ENCODE measurements at regions of chr22 and their contacts with region 1.

Region 1: GRCh38 chr22:42270512-42271417 is at the start of gene TCF20:
- DNase-seq: peak; percentile 90
- ATAC-seq: peak; percentile 81
- H3K4me3 ChIP-seq: peak within 1 kb of the TSS; percentile 34 to 93 (median 87)
- H3K4me3 Mint-ChIP-seq: peak within 1 kb of the TSS; percentile 91
- H3K27ac ChIP-seq: peak within 1 kb of the TSS; percentile 61 to 86
- H3K27ac Mint-ChIP-seq: peak within 1 kb of the TSS; percentile 87
- H3K4me1 ChIP-seq: peaks cover 14 to 19% of the 10 kb centered on the region in 2 donors
- H3K4me1 Mint-ChIP-seq: peaks cover 26% of the 10 kb centered on the region
- H3K27me3 ChIP-seq: no peaks in the 10 kb centered on the region
- H3K27me3 Mint-ChIP-seq: no peaks in the 10 kb centered on the region
- CTCF ChIP-seq: no peak
- total RNA-seq, gene TCF20: 67.0 and 81.3 TPM in 2 replicates

Region 2: DNA sequence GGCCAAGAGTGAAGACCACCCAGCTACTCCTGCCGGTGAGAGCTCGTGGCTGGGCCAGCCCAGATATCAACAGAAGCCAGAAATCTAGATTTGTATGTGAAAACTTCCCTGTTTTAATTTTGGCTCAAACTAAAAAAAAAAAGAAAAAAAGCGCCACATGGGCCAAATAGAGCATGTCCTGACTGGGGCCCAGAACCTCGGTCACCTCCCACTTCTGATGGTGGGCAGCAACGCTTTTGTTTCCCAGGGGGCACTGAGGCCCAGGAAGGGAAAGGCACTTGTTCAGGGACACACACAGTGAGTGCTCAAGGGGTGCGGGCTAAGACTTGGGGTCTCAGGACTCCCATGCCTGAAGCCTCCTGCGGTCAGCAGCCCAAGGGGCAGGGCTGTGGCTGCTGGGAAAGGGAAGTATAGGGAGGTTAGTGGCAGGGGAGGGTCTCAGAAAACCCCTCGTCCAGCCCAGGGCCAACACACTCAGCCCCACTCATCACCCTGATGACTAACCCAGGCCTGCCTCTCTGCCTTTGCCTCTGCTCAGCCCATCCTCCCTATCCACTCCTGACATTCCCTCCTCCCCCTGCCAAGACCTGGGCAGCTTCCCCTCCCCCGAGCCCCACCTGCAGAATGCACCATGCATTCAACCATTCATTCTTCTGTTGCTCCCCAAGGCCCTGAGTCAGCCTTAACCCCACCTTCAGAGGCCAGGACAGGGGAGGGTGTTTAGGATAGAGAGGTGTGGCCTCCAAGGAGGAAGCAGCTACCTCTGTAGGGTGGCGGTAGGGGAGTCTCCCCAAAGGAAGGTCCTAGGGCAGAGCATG is 29.7 kb after region 1 on chr22:
- CTCF ChIA-PET with region 1: no interaction called
- POLR2A ChIA-PET with region 1: no interaction called
- intact Hi-C with region 1: loop called (anchors 1 kb)
- DNase-seq: peak; percentile 79
- ATAC-seq: peak; percentile 91
- H3K4me3 ChIP-seq: peak overlapping the region in 4 of 5 experiments; percentile 46 to 61 (median 58)
- H3K4me3 Mint-ChIP-seq: peak overlapping the region; percentile 86
- H3K27ac ChIP-seq: peak overlapping the region; percentile 79 to 82
- H3K27ac Mint-ChIP-seq: peak overlapping the region; percentile 91
- H3K4me1 ChIP-seq: peaks cover 52 to 68% of the 10 kb centered on the region in 2 donors
- H3K4me1 Mint-ChIP-seq: peaks cover 51% of the 10 kb centered on the region
- H3K27me3 ChIP-seq: peaks cover 0 to 10% (median 2%) of the 10 kb centered on the region in 4 experiments
- H3K27me3 Mint-ChIP-seq: peaks cover 9% of the 10 kb centered on the region
- CTCF ChIP-seq: no peak

Region 3: DNA sequence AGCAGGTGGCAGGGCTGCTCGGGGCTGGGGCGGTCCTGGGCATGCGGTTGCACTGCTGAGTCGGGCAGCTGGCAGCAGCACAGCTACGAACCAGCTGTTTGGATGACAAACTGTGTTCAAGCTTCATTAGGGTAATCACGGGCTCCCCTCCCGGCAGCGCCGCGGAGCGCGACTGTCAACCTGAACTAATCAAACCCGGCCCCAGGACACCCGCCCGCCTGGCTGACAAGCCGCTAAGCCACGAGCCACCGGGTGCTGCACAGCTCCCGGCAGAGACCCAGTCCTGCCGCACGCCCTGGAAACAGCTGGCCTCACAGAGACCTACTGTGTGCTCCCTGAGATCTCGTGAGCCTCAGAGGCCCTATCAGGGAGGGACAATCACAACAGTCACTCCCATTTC is 60.2 kb after region 1 on chr22:
- CTCF ChIA-PET with region 1: no interaction called
- POLR2A ChIA-PET with region 1: no interaction called
- intact Hi-C with region 1: no loop called
- DNase-seq: no peak
- ATAC-seq: no peak
- H3K4me3 ChIP-seq: no peak overlapping the region
- H3K4me3 Mint-ChIP-seq: no peak overlapping the region
- H3K27ac ChIP-seq: no peak overlapping the region
- H3K27ac Mint-ChIP-seq: no peak overlapping the region
- H3K4me1 ChIP-seq: peaks cover 3 to 4% of the 10 kb centered on the region in 2 donors
- H3K4me1 Mint-ChIP-seq: peaks cover 10% of the 10 kb centered on the region
- H3K27me3 ChIP-seq: peaks cover 0 to 14% (median 4%) of the 10 kb centered on the region in 4 experiments
- H3K27me3 Mint-ChIP-seq: peaks cover 28% of the 10 kb centered on the region
- CTCF ChIP-seq: no peak

Measured in B cell (primary cell).